Activated naive CD8-positive, alpha-beta T cell treated with anti-CD3 and anti-CD28 coated beads, Interleukin-2, amount 10 ng/mL, durations not matched to agents 7 days and 5 days (primary cell): ENCODE measurements at regions of chr10 and their contacts with region 1.

Region 1: DNA sequence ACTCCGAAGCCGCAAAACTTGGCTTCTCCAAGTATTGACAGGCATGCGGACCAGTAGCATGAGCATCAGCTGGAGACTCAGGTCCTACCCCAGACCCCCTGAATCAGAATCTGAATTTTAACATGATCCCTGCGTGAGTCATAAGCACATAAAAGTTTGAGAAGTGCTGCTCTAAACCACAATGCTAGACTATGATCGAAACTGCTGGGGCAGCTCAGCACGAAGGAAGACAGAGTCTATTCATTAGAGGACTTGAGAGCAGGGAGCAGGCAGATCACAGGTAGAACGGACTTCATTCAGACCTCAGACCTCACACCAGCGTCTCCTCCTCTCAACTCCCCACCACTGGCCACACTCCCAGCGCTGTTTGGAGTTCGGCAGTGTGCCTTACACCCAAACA is 16.9 kb downstream of the CAMK2G start:
- DNase-seq: no peak
- ATAC-seq: peak; percentile 74
- H3K4me3 Mint-ChIP-seq: peak overlapping the region; percentile 67
- H3K27ac Mint-ChIP-seq: peak overlapping the region; percentile 75
- H3K4me1 Mint-ChIP-seq: peaks cover 59% of the 10 kb centered on the region
- H3K27me3 Mint-ChIP-seq: no peaks in the 10 kb centered on the region

Region 2: DNA sequence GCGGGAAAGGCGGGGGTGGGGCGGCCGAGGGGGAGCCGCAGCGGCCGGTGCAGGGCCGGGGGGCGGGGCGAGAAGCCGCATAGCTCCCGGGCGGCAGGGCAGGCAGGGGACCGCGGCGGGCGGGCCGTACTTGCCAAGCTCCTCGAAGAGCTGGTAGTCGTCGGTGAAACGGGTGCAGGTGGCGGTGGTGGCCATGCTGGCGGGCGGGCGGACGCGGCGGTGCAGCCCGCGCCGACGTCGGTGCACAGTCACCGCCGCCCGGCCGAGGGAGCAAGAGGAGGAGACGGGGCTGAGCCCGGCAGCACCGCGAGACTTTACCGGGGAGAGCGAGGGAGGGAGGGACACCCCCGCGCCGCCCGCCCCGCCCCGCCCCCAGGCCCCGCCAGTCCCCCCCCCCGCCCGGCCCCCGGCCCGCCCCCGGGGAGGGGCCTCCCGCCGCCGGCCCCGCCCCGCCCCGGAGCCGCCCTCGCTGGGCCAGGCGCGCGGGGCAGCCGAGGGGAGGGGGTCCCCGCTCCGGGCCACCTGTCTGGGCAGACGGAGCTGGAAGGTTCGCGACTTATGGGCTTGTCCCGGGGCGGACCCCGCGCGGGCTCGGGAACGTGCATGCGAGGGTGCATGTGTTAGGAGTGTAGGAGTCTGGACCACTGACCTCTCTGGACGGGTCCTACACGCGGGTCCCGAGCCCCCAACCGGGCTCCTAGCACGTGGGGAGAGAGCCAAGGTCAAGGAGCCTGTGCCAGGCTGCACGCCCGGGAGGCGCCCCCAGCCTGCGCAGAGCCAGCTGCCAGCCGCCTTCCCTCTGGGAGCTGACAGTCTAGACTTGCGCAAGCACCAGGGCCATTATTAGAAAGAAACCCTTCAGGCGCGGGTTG is 17.1 kb after region 1 on chr10 and contains the start of gene CAMK2G:
- POLR2A ChIA-PET with region 1: interaction called, 24 read pairs
- DNase-seq: peak; percentile 86
- ATAC-seq: peak; percentile 88
- H3K4me3 Mint-ChIP-seq: peak within 1 kb of the TSS; percentile 95
- H3K27ac Mint-ChIP-seq: peak within 1 kb of the TSS; percentile 79
- H3K4me1 Mint-ChIP-seq: peaks cover 55% of the 10 kb centered on the region
- H3K27me3 Mint-ChIP-seq: no peaks in the 10 kb centered on the region
- total RNA-seq, gene CAMK2G: 48.6 to 53.5 TPM